B cell (primary cell): ENCODE measurements at regions of chr19 and their contacts with region 1.

Region 1: DNA sequence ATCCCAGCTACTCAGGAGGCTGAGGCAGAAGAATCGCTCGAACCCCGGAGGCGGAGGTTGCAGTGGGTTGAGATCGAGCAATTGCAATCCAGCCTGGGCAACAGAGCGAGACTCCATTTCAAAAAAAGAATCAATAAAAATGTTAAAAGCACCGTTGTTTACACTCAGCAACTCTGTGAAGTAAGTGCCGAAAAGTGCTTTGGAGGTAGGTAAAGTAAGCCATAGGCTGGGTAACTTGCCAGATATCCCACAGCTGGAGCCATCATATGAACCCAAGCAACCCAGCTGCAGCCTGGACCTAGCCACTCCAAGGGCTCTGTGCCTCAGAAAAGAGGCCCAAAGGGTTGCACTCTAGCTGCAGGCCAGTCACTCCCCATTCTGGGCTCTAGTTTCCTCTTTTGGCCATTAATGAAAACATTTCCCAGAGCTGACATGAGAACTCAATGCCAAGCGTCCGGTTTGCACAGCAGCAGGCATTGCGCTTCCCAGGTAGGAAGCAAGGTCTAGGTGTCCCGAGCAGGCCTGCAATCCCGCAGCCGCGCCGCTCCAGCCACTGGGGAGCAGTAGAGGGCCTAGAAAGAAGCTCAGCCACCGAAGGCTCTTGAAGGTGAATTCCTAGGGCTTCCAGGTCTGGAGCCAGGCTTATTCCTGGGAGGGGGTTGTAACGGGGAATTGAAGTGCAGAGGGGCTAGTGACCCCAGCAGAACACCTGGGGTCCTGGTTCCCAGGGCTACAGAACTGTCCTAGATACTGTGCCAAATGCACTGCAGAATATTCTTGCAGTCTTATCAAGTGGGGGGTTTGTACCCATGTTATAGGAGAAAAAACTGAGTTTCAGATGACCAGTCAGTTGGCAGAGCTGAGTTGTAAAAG is 4.1 kb upstream of the CD79A start:
- DNase-seq: peak; percentile 80
- ATAC-seq: no peak
- H3K4me3 ChIP-seq: no peak overlapping the region
- H3K4me3 Mint-ChIP-seq: peak overlapping the region; percentile 52
- H3K27ac ChIP-seq: peak overlapping the region; percentile 79 to 96
- H3K27ac Mint-ChIP-seq: peak overlapping the region; percentile 90
- H3K4me1 ChIP-seq: peaks cover 68 to 90% of the 10 kb centered on the region in 2 donors
- H3K4me1 Mint-ChIP-seq: peaks cover 70% of the 10 kb centered on the region
- H3K27me3 ChIP-seq: no peaks in the 10 kb centered on the region
- H3K27me3 Mint-ChIP-seq: no peaks in the 10 kb centered on the region
- CTCF ChIP-seq: peak; percentile 82

Region 2: DNA sequence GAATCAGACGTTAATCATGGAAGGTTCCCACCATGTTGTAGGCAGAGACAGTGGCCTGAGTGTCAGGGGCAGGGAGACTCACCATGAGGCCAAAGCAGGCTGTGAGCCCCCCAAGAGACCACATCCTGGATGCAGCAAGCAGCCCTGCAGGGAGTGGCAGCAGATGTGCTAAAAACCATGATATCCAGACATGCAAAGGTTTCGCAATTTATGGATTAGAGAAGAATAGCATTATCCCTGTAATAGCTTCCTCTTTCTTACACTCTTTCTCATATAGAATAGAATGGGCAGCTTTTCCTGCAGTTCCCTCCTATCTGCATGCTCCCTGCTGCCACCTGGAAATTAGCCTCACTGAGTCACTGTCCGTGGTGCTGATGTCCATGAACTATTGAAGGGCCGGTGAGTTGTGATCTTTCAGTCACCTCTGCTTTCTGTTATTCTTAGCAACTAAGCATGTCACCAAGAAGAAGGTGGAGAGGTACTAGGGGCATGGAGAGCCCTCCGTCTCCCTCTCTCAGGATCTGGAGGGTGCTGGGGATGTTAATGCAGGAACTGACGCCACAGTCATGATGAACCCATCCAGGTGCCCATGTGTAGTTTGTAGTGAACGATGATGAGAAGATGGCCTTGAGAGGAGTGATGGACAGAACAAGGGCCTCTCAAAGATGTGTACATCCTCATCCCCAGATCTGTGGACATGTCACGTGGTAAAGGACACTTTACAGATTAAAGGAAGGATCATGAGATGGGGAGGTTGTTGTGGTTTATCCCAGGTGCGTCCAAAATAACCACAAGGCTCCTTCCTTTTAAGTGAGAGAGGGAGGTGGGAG is 256.0 kb before region 1 on chr19:
- CTCF ChIA-PET with region 1: no interaction called
- POLR2A ChIA-PET with region 1: no interaction called
- intact Hi-C with region 1: no loop called
- DNase-seq: no peak
- ATAC-seq: no peak
- H3K4me3 ChIP-seq: no peak overlapping the region
- H3K4me3 Mint-ChIP-seq: no peak overlapping the region
- H3K27ac ChIP-seq: no peak overlapping the region
- H3K27ac Mint-ChIP-seq: no peak overlapping the region
- H3K4me1 ChIP-seq: no peaks in the 10 kb centered on the region
- H3K4me1 Mint-ChIP-seq: no peaks in the 10 kb centered on the region
- H3K27me3 ChIP-seq: peaks cover 0 to 16% (median 5%) of the 10 kb centered on the region in 4 experiments
- H3K27me3 Mint-ChIP-seq: peaks cover 45% of the 10 kb centered on the region
- CTCF ChIP-seq: no peak

Region 3: GRCh38 chr19:41851456-41851855 is 21.6 kb before region 1 on chr19:
- CTCF ChIA-PET with region 1: no interaction called
- POLR2A ChIA-PET with region 1: no interaction called
- intact Hi-C with region 1: no loop called
- DNase-seq: no peak
- ATAC-seq: no peak
- H3K4me3 ChIP-seq: no peak overlapping the region
- H3K4me3 Mint-ChIP-seq: no peak overlapping the region
- H3K27ac ChIP-seq: no peak overlapping the region
- H3K27ac Mint-ChIP-seq: no peak overlapping the region
- H3K4me1 ChIP-seq: no peaks in the 10 kb centered on the region
- H3K4me1 Mint-ChIP-seq: no peaks in the 10 kb centered on the region
- H3K27me3 ChIP-seq: no peaks in the 10 kb centered on the region
- H3K27me3 Mint-ChIP-seq: peaks cover 4% of the 10 kb centered on the region
- CTCF ChIP-seq: no peak

Region 4: DNA sequence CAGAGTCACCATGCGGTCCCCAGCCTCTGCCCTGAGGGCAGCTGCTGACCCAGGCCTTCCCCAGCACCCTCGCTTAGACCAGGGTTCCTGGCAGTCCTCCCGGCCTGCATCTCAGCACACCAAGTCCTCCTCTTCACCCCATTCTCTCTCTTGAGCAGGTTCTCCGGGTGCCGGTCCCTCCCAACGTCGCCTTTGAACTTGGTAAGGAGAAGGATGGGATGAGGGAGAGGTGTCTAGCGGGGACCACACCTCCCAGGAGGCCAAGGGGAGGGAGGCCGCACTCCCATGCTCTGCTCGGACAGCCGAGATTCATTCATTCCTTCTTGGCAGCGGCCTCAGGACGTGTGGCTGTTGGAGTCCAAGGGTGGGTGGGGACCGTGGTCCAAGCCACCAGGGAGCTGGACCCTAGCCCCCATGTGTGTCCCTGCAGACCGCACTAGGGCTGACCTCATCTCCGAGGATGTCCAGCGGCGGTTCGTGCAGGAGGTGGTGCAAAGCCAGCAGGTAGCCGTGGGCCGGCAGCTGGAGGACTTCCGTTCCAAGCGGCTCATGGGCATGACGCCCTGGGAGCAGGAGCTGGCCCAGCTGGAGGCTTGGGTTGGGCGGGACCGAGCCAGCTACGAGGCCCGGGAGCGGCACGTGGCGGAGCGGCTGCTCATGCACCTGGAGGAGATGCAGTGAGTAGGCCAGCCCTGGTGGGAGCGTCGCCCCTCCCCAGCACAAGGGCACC is 19.3 kb after region 1 on chr19:
- CTCF ChIA-PET with region 1: interaction called, 180 read pairs
- POLR2A ChIA-PET with region 1: interaction called, 92 read pairs
- intact Hi-C with region 1: loop called (anchors 1 kb)
- DNase-seq: no peak
- ATAC-seq: no peak
- H3K4me3 ChIP-seq: no peak overlapping the region
- H3K4me3 Mint-ChIP-seq: no peak overlapping the region
- H3K27ac ChIP-seq: peak overlapping the region in 1 of 2 donors; percentile 56
- H3K27ac Mint-ChIP-seq: no peak overlapping the region
- H3K4me1 ChIP-seq: peaks cover 12 to 41% of the 10 kb centered on the region in 2 donors
- H3K4me1 Mint-ChIP-seq: peaks cover 32% of the 10 kb centered on the region
- H3K27me3 ChIP-seq: no peaks in the 10 kb centered on the region
- H3K27me3 Mint-ChIP-seq: no peaks in the 10 kb centered on the region
- CTCF ChIP-seq: no peak

Region 5: GRCh38 chr19:41934849-41935374 is 61.9 kb after region 1 on chr19:
- CTCF ChIA-PET with region 1: interaction called, 28 read pairs
- POLR2A ChIA-PET with region 1: interaction called, 8 read pairs
- intact Hi-C with region 1: loop called (anchors 2 kb)
- DNase-seq: peak; percentile 88
- ATAC-seq: peak; percentile 84
- H3K4me3 ChIP-seq: no peak overlapping the region
- H3K4me3 Mint-ChIP-seq: peak overlapping the region; percentile 33
- H3K27ac ChIP-seq: peak overlapping the region in 1 of 2 donors; percentile 55
- H3K27ac Mint-ChIP-seq: peak overlapping the region; percentile 86
- H3K4me1 ChIP-seq: peaks cover 42 to 69% of the 10 kb centered on the region in 2 donors
- H3K4me1 Mint-ChIP-seq: peaks cover 53% of the 10 kb centered on the region
- H3K27me3 ChIP-seq: peaks cover 0 to 10% (median 0%) of the 10 kb centered on the region in 4 experiments
- H3K27me3 Mint-ChIP-seq: no peaks in the 10 kb centered on the region
- CTCF ChIP-seq: peak; percentile 89

Region 6: GRCh38 chr19:41951686-41952172 is 78.7 kb after region 1 on chr19:
- CTCF ChIA-PET with region 1: interaction called, 331 read pairs
- POLR2A ChIA-PET with region 1: interaction called, 94 read pairs
- intact Hi-C with region 1: loop called (anchors 1 kb)
- DNase-seq: peak; percentile 88
- ATAC-seq: peak; percentile 94
- H3K4me3 ChIP-seq: no peak overlapping the region
- H3K4me3 Mint-ChIP-seq: no peak overlapping the region
- H3K27ac ChIP-seq: no peak overlapping the region
- H3K27ac Mint-ChIP-seq: peak overlapping the region; percentile 74
- H3K4me1 ChIP-seq: peaks cover 14 to 23% of the 10 kb centered on the region in 2 donors
- H3K4me1 Mint-ChIP-seq: peaks cover 33% of the 10 kb centered on the region
- H3K27me3 ChIP-seq: no peaks in the 10 kb centered on the region
- H3K27me3 Mint-ChIP-seq: no peaks in the 10 kb centered on the region
- CTCF ChIP-seq: peak; percentile 99